ENCODE measurements at regions of chr22 and their contacts with region 1.

Region 1: GRCh38 chr22:24938741-24939341 is 7.7 kb downstream of the LHFPL7 start:
- DNase-seq: no peak
- H3K4me3 ChIP-seq: no peak overlapping the region
- CTCF ChIP-seq: peak; percentile 63

Region 2: GRCh38 chr22:24827296-24827695 is 111.5 kb before region 1 on chr22:
- CTCF ChIA-PET with region 1: no interaction called
- POLR2A ChIA-PET with region 1: no interaction called
- DNase-seq: no peak
- H3K4me3 ChIP-seq: no peak overlapping the region
- CTCF ChIP-seq: no peak

Region 3: GRCh38 chr22:24951942-24952836 is 13.3 kb after region 1 on chr22 and contains the start of gene KIAA1671:
- CTCF ChIA-PET with region 1: interaction called, 10 read pairs
- POLR2A ChIA-PET with region 1: no interaction called
- DNase-seq: no peak
- H3K4me3 ChIP-seq: peak within 1 kb of the TSS; percentile 62
- CTCF ChIP-seq: peak; percentile 81

Region 4: GRCh38 chr22:25048659-25049647 is 110.1 kb after region 1 on chr22:
- CTCF ChIA-PET with region 1: interaction called, 58 read pairs
- POLR2A ChIA-PET with region 1: no interaction called
- DNase-seq: no peak
- H3K4me3 ChIP-seq: no peak overlapping the region
- CTCF ChIP-seq: peak; percentile 74

Region 5: GRCh38 chr22:25057013-25057881 is 118.4 kb after region 1 on chr22:
- CTCF ChIA-PET with region 1: interaction called, 13 read pairs
- POLR2A ChIA-PET with region 1: no interaction called
- DNase-seq: no peak
- H3K4me3 ChIP-seq: no peak overlapping the region
- CTCF ChIP-seq: peak; percentile 87